ENCODE measurements at regions of chr12 and their contacts with region 1.

Region 1: DNA sequence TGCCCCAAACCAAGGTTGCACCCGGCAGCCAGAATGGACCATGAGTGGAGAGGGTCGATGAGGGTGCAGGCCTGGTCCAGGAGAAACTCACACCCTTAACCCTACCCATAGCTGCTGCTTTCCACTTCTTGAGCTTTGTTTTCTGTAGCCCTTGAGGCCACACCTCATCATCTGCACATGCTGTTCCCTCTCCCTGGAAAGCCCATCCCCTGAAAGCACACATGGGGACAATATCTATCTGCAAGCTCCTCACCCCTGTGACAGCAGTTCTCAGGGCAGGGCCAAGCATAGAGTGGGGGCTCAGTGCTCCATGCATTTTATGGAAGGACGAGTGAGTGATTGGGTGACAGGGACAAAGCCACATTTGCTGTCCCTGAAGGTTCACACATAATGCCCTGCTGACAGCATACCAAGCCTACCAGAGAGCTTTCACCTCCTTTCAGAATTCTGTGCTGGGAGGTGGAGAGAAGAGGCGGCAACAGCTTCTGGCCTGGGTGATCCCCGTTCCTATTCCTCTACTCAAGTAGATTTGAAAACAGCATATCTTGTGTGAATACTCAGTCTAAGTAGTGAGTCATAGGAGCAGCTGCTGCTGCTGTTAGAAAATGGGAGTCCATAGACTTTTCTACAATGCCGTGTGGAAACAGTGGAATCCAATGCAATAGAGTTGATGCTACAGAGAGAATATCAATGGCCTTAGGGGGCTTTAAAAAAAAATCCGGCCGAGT is 44.6 kb downstream of the SRGAP1 start:
- DNase-seq: peak; percentile 12
- H3K4me3 ChIP-seq: no peak overlapping the region
- H3K27ac ChIP-seq: no peak overlapping the region
- H3K4me1 ChIP-seq: peaks cover 8% of the 10 kb centered on the region
- H3K27me3 ChIP-seq: no peaks in the 10 kb centered on the region
- CTCF ChIP-seq: no peak

Region 2: GRCh38 chr12:64186789-64187188 is 297.7 kb after region 1 on chr12:
- CTCF ChIA-PET with region 1: interaction called, 11 read pairs
- dilution Hi-C with region 1: no loop called
- in situ Hi-C with region 1: no loop called
- intact Hi-C with region 1: no loop called
- DNase-seq: peak; percentile 46
- H3K4me3 ChIP-seq: no peak overlapping the region
- H3K27ac ChIP-seq: peak overlapping the region; percentile 48
- H3K4me1 ChIP-seq: peaks cover 26% of the 10 kb centered on the region
- H3K27me3 ChIP-seq: no peaks in the 10 kb centered on the region
- CTCF ChIP-seq: no peak